ENCODE measurements at regions of chr14 and their contacts with region 1.

Region 1: DNA sequence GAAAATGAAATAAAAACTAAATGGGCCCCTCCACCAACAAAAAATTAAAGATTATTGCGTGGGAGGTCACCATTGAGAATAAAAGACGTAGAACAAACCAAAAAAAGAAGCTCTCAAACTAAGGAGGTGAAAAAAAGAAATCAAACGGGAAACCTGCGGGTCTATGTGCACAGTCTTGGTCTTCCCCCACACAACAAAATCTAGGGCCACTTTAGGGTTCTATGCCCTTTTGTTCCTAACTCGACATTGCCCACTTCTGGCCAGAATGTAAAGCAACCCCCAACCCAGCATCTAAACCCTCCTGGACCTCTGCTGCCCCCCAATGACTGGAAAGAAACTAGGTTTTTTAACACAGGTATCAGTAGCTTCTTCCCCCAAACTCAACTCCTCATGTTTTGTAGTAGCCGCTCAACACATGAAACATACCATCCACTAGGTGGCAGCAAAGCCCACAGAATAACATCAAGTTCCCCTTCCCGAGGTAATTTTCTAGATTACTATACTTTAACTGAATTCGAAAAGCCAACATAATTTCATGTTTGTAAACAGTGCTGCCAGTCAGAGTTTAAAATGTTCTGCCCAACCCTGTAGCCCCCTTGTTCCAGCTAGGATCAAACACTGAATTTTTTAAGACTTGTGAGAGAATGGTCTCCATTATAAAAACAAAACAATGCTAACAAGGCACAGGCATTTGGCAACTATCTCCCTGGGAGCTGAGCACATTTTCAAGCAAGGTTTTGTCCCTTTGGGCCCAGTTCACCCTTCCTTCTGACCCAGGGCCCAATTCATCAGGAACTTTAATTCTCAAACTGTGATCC is 18.7 kb downstream of the DAD1 start:
- ATAC-seq: peak; percentile 44 to 86 (median 60)
- H3K4me3 ChIP-seq: no peak overlapping the region
- H3K27ac ChIP-seq: no peak overlapping the region
- H3K4me1 ChIP-seq: peaks cover 0 to 2% of the 10 kb centered on the region in 2 donors

Region 2: DNA sequence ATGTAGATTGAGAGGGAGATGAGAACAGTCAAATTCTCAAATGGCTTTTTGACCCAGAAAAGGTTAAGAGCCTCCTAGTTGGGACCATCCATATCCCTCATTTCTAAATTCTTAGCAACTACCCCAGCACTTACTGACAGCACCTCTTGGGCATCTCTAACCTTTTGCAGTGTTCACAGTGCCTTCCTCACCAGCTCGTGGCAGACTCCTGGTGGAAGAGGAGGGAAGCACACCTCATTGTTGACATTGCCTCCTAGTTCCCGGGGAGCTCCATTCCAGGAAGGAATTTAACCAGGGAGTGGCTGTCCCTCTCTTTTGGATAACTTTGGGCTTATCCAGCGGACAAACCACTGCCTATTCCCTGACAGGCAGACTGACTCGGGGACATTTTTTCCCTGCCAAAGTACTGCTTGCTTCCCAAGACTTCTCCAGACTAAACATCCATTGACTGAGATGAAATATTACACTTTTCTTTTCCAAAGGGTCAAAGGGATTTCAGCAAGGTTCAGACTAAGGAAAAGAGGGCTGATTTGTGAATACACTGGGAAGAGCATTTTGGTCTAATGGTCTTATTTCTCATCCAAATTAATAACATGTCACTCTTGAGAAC is 82.8 kb after region 1 on chr14:
- in situ Hi-C with region 1: loop called in 3 of 9 experiments (anchors 10 to 25 kb)
- ATAC-seq: peak in 7 of 8 experiments; percentile 44 to 89 (median 80)
- H3K4me3 ChIP-seq: no peak overlapping the region
- H3K27ac ChIP-seq: no peak overlapping the region
- H3K4me1 ChIP-seq: no peaks in the 10 kb centered on the region

Region 3: GRCh38 chr14:22829661-22830442 is 259.5 kb after region 1 on chr14 and contains the start of gene MRPL52:
- in situ Hi-C with region 1: loop called in 1 of 9 experiments (anchors 25 kb)
- ATAC-seq: peak; percentile 81 to 98 (median 97)
- H3K4me3 ChIP-seq: peak within 1 kb of the TSS; percentile 64 to 98 (median 93)
- H3K27ac ChIP-seq: peak within 1 kb of the TSS; percentile 61 to 75
- H3K4me1 ChIP-seq: peaks cover 6 to 8% of the 10 kb centered on the region in 2 donors
- total RNA-seq, gene MRPL52: 60.7 to 112 (median 87.1) TPM

Region 4: GRCh38 chr14:22848351-22849164 is 278.2 kb after region 1 on chr14:
- in situ Hi-C with region 1: loop called (anchors 10 to 25 kb)
- ATAC-seq: peak; percentile 23 to 47 (median 34)
- H3K4me3 ChIP-seq: no peak overlapping the region
- H3K27ac ChIP-seq: no peak overlapping the region
- H3K4me1 ChIP-seq: peaks cover 2 to 5% of the 10 kb centered on the region in 2 donors

Region 5: GRCh38 chr14:22872033-22872832 is 301.9 kb after region 1 on chr14:
- in situ Hi-C with region 1: loop called in 7 of 9 experiments (anchors 25 kb)
- ATAC-seq: peak; percentile 30 to 54 (median 50)
- H3K4me3 ChIP-seq: peak overlapping the region; percentile 31 to 88 (median 54)
- H3K27ac ChIP-seq: peak overlapping the region; percentile 13 to 16
- H3K4me1 ChIP-seq: peaks cover 0 to 5% of the 10 kb centered on the region in 2 donors

Region 6: DNA sequence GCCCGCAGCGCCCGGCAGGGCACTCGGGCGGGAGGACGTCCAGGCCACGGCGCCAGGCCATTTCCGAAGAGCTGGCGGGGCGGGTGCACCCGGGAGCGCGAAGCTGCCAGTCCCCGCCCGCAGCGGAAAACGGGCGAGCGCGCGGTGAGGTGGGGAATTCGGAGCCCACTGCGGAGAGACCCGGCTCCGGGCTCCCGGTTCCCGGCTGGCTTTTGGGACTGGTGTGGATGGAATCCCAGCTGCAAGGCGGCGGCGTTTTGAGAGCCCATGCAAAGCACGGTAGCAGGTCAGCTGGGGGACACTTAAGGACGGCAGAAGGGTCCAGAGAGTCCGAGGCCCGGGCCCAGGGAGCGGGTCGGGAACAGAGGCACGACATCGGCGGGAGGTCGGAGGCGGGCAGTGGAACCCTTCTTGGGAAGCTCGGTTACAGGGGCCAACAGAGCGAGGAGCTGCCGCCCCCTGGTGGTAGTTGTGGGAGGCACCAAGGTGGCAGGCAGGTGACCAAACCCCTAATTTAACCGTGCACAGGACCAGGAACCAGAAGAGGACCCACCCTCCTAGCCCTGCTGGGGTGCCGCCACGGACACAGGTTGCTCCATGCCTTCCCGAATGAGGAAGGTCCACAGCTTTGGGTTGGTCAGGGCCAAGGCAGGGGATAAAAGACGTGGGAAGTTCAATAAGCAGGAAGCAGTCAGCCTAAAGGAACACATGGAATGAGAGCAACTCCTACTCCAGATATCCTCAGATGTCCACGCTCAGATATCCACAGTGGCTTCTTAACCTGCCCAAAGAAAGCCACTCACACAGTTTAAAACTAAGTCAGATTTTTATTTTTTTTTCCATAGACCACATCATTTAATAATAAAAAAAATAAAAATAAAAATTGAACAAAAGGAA is 487.7 kb after region 1 on chr14:
- in situ Hi-C with region 1: loop called in 3 of 9 experiments (anchors 25 kb)
- ATAC-seq: peak; percentile 57 to 78 (median 75)
- H3K4me3 ChIP-seq: peak overlapping the region; percentile 47 to 84 (median 61)
- H3K27ac ChIP-seq: peak overlapping the region; percentile 52 to 58
- H3K4me1 ChIP-seq: peaks cover 6 to 10% of the 10 kb centered on the region in 2 donors

Measured in motor neuron (in vitro differentiated cells).